SK-N-SH (cell line): ENCODE measurements at regions of chr14 and their contacts with region 1.

Region 1: GRCh38 chr14:99729991-99730868 is 46.1 kb downstream of the CYP46A1 start:
- DNase-seq: peak; percentile 97
- H3K4me3 ChIP-seq: peak overlapping the region; percentile 46 to 63
- H3K27ac ChIP-seq: no peak overlapping the region
- H3K4me1 ChIP-seq: peaks cover 0 to 10% of the 10 kb centered on the region in 2 experiments; a peak in 1 of 4 replicates
- H3K27me3 ChIP-seq: no peaks in the 10 kb centered on the region
- CTCF ChIP-seq: peak; percentile 84
- EP300 ChIP-seq: no peak
- RAD21 ChIP-seq: peak; percentile 79

Region 2: GRCh38 chr14:99480917-99481744 is 249.1 kb before region 1 on chr14 and contains the start of gene CCNK:
- CTCF ChIA-PET with region 1: no interaction called
- POLR2A ChIA-PET with region 1: no interaction called
- DNase-seq: peak; percentile 98
- H3K4me3 ChIP-seq: peak within 1 kb of the TSS; percentile 95 to 96
- H3K27ac ChIP-seq: peak within 1 kb of the TSS; percentile 72 to 91
- H3K4me1 ChIP-seq: peaks cover 21 to 23% of the 10 kb centered on the region in 2 experiments
- H3K27me3 ChIP-seq: no peaks in the 10 kb centered on the region
- CTCF ChIP-seq: no peak
- EP300 ChIP-seq: no peak
- RAD21 ChIP-seq: no peak
- polyA plus RNA-seq, gene CCNK: 9.0 and 14.6 TPM in 2 replicates

Region 3: DNA sequence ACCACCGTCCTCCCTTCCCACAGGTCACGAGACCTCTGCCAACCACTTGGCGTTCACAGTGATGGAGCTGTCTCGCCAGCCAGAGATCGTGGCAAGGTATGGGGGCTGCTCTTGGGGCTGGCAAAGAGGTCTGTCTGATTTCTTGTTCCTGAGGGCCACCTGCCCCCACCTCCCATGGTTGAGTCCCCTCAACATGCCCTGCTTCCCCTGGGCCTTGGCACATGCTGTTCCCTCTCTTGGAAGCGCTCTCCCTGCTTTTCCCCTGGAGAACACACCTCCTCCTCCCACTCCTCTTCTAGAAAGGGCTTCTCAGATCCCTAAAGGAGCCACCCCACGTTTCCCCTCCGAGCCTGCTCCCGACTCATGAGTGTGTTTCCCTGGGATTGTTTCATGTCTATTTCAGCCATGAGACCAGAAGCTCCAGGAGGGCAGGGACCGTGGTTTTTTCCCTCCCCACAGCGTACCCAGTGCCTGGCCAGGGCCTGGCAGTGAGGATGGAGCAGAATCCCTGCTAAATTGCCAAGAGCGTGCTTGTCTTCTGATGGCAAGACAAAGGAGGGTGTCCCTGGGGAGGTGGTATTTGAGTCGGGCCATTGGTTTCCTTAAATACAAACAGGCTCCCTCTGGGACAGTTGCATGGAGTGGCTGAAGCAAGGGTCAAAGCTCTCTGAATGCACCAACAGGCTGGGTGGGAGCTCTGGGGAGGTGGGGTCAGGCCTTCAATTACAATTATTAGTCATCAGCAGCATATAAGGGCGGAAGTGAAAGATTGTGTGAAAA is 12.0 kb before region 1 on chr14:
- CTCF ChIA-PET with region 1: interaction called, 13 read pairs
- POLR2A ChIA-PET with region 1: no interaction called
- DNase-seq: no peak
- H3K4me3 ChIP-seq: no peak overlapping the region
- H3K27ac ChIP-seq: no peak overlapping the region
- H3K4me1 ChIP-seq: no peaks in the 10 kb centered on the region
- H3K27me3 ChIP-seq: no peaks in the 10 kb centered on the region
- CTCF ChIP-seq: no peak
- EP300 ChIP-seq: no peak
- RAD21 ChIP-seq: no peak

Region 4: DNA sequence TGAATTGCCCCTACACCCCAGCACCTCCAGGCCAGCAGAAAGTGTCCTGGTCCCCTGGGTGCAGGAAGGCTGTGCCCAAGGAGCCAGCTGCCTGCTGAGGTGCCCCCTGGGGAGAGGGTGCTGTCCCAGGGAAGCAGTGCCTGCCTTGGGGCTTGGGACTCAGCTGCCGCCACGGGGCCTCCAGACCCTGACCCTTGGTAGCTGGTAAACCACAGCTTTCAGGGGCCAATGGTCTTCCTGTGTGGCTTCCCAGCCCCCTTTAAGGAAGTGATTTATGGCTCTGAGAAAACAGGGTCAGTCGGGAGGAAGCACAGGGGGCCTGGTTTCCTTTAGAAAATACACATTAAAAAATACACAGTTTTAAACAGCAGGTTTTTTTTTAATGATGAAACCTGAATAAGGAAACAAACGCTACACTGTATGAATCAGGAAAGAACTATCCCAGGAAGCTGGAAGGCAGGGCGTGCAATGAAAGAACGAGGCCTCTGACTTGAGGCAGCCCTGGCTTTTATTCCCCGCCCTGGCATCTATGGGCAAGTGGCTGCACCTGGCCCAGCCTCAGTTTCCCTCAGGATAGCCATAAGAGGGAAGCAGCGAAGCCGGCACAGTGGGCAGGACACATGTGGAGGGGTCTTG is 22.4 kb after region 1 on chr14:
- CTCF ChIA-PET with region 1: interaction called, 25 read pairs
- POLR2A ChIA-PET with region 1: no interaction called
- DNase-seq: no peak
- H3K4me3 ChIP-seq: no peak overlapping the region
- H3K27ac ChIP-seq: peak overlapping the region in 1 of 2 experiments; percentile 37; a peak in 2 of 4 replicates
- H3K4me1 ChIP-seq: peaks cover 19 to 45% of the 10 kb centered on the region in 2 experiments; a peak in 3 of 4 replicates
- H3K27me3 ChIP-seq: no peaks in the 10 kb centered on the region
- CTCF ChIP-seq: no peak
- EP300 ChIP-seq: no peak
- RAD21 ChIP-seq: no peak

Region 5: DNA sequence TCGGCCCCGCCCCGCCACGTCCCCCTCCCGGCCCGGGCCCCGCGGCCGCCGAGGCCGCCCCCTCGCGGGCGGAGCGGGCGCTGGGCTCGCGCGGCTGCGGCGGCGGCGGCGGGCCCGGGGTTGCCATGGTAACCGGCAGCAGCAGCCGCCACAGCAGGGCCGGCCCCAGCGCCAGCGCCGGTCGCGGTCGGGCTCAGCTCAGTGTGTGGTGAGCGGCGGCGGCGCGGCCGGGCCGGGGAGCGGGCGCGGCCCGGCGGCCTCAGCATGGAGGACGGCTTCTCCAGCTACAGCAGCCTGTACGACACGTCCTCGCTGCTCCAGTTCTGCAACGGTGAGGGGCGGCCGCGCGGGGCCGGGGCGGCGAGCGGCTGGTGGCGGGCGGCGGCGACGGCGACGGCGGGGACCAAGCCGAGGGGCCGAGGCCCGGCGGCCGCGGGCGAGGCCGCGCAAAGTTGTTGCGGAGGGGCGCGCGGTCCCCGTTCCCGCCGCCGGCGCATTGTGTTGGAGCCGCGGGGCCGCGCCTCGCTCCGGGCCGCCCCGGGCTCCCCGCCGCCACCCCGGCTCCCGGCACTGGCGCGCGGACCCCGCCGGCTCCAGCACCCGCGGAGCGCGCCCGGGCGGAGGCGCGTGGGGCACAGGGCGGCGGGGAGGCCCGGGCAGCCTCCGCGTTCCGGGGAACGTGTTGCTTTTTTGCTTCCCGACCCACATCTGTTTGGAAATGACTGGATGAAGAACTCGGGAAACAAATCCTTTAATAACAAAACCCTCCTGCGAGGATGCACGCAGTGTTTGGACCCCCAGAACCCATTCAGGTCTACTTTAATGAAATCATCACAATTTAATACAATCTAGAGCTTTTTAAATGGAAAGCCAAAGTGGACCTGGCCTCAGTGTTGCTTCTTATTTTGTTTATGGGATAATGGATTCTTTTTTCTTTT is 63.3 kb after region 1 on chr14 and contains the start of gene EML1:
- CTCF ChIA-PET with region 1: interaction called, 40 read pairs
- POLR2A ChIA-PET with region 1: no interaction called
- DNase-seq: peak; percentile 99
- H3K4me3 ChIP-seq: peak within 1 kb of the TSS; percentile 65 to 68
- H3K27ac ChIP-seq: peak within 1 kb of the TSS; percentile 58 to 82; a peak in 3 of 4 replicates
- H3K4me1 ChIP-seq: peaks cover 12 to 15% of the 10 kb centered on the region in 2 experiments; a peak in 3 of 4 replicates
- H3K27me3 ChIP-seq: no peaks in the 10 kb centered on the region
- CTCF ChIP-seq: no peak
- EP300 ChIP-seq: no peak
- RAD21 ChIP-seq: no peak
- polyA plus RNA-seq, gene EML1: 4.4 and 6.3 TPM in 2 replicates

Region 6: DNA sequence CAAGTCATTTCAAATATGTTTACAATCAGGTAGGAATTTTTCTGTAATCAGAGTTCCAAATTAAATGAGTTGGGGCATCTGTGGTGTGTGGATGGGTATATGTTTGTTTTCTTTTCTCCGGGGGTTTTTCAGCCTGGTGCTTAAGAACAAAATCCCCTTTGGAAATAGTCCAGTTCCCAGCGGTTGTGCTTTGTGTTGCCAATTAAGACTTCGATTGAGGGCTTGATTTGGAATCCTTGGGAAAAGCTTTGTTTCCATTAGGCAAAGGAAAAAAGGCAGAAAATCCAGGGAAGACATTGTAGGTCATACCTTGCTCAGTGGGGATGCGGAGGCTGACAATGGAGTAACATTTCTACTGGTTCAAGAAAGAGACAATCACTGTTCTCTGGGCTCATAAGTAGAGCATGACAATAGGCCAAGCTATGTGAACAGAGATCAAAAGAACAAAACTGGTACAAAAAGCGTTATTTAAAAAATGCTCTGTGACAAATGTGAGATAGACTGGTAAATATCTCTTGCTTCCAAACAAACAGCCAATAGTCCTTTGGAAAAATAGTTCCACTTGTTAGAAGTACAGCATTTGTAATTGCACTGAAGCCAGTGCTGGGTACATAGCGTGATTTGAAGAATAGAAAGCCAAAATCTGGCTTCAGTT is 142.7 kb after region 1 on chr14:
- CTCF ChIA-PET with region 1: interaction called, 40 read pairs
- POLR2A ChIA-PET with region 1: no interaction called
- DNase-seq: peak; percentile 38
- H3K4me3 ChIP-seq: no peak overlapping the region
- H3K27ac ChIP-seq: peak overlapping the region in 1 of 2 experiments; percentile 58; a peak in 2 of 4 replicates
- H3K4me1 ChIP-seq: peaks cover 0 to 39% of the 10 kb centered on the region in 2 experiments; a peak in 2 of 4 replicates
- H3K27me3 ChIP-seq: no peaks in the 10 kb centered on the region
- CTCF ChIP-seq: no peak
- EP300 ChIP-seq: peak in 1 of 2 experiments; percentile 35; a peak in 1 of 4 replicates
- RAD21 ChIP-seq: no peak

Region 7: DNA sequence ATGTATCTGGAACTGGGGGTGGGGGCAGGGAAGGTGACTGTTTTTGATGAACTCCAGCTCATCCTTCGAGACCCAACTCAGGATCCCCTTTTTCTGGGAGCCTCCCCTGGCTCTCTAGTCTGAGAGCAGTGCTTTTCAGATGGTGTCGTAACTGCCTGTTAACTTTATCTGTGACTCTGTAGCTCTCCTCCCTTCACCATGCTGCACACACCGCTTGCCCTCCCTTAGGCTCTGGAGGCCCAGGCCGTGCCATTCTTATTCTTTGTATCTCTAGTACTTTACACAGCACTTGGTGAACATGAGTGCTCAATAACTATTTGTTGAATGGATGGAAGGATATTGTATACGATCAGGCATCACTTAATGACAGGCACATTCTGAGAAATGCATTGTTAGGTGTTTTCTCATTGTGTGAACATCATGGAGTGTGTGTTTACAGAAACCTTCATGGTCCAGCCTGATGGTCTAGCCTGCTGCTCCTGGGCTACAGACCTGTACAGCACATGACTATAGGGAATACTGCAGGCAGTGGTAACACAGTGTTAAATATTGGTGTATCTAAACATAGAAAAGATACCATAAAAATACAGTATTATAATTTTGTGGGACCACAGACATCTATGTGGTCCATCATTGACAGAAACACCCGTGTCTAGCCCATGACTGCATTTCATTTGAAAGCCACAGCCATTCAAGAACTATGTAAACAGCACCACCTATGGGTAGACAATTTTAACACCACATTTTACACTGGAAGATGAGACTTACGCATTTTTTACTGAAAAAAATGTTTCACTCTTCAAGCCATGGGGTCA is 154.8 kb after region 1 on chr14:
- CTCF ChIA-PET with region 1: interaction called, 136 read pairs
- POLR2A ChIA-PET with region 1: no interaction called
- DNase-seq: peak; percentile 69
- H3K4me3 ChIP-seq: no peak overlapping the region; a peak in 1 of 4 replicates
- H3K27ac ChIP-seq: no peak overlapping the region
- H3K4me1 ChIP-seq: peaks cover 4 to 5% of the 10 kb centered on the region in 2 experiments; a peak in 3 of 4 replicates
- H3K27me3 ChIP-seq: no peaks in the 10 kb centered on the region
- CTCF ChIP-seq: peak; percentile 89
- EP300 ChIP-seq: no peak
- RAD21 ChIP-seq: peak; percentile 96